A673 (cell line): ENCODE measurements at regions of chr11 and their contacts with region 1.

Region 1: GRCh38 chr11:28107748-28108618 is at the starts of genes KIF18A and METTL15:
- DNase-seq: peak; percentile 100
- H3K4me3 ChIP-seq: peak within 1 kb of the TSS; percentile 57
- H3K27ac ChIP-seq: peak within 1 kb of the TSS; percentile 86
- H3K4me1 ChIP-seq: peaks cover 59% of the 10 kb centered on the region
- H3K27me3 ChIP-seq: no peaks in the 10 kb centered on the region
- CTCF ChIP-seq: no peak
- total RNA-seq, gene KIF18A: 103 and 117 TPM in 2 replicates
- total RNA-seq, gene METTL15: 31.3 and 36.6 TPM in 2 replicates

Region 2: GRCh38 chr11:26914968-26915367 is 1193.0 kb before region 1 on chr11:
- CTCF ChIA-PET with region 1: no interaction called
- POLR2A ChIA-PET with region 1: interaction called, 11 read pairs
- intact Hi-C with region 1: no loop called
- DNase-seq: no peak
- H3K4me3 ChIP-seq: no peak overlapping the region
- H3K27ac ChIP-seq: no peak overlapping the region
- H3K4me1 ChIP-seq: no peaks in the 10 kb centered on the region
- H3K27me3 ChIP-seq: peaks cover 60% of the 10 kb centered on the region
- CTCF ChIP-seq: no peak

Region 3: GRCh38 chr11:27506200-27507182 is 601.5 kb before region 1 on chr11 and contains the start of gene LIN7C:
- CTCF ChIA-PET with region 1: no interaction called
- POLR2A ChIA-PET with region 1: no interaction called
- intact Hi-C with region 1: loop called (anchors 10 kb)
- DNase-seq: peak; percentile 100
- H3K4me3 ChIP-seq: peak within 1 kb of the TSS; percentile 65
- H3K27ac ChIP-seq: peak within 1 kb of the TSS; percentile 91
- H3K4me1 ChIP-seq: peaks cover 20% of the 10 kb centered on the region
- H3K27me3 ChIP-seq: no peaks in the 10 kb centered on the region
- CTCF ChIP-seq: peak; percentile 37
- total RNA-seq, gene LIN7C: 114 and 131 TPM in 2 replicates

Region 4: GRCh38 chr11:28476049-28476448 is 368.1 kb after region 1 on chr11:
- CTCF ChIA-PET with region 1: no interaction called
- POLR2A ChIA-PET with region 1: no interaction called
- intact Hi-C with region 1: loop called (anchors 5 kb)
- DNase-seq: peak; percentile 93
- H3K4me3 ChIP-seq: no peak overlapping the region
- H3K27ac ChIP-seq: no peak overlapping the region
- H3K4me1 ChIP-seq: peaks cover 9% of the 10 kb centered on the region
- H3K27me3 ChIP-seq: peaks cover 76% of the 10 kb centered on the region
- CTCF ChIP-seq: no peak

Region 5: DNA sequence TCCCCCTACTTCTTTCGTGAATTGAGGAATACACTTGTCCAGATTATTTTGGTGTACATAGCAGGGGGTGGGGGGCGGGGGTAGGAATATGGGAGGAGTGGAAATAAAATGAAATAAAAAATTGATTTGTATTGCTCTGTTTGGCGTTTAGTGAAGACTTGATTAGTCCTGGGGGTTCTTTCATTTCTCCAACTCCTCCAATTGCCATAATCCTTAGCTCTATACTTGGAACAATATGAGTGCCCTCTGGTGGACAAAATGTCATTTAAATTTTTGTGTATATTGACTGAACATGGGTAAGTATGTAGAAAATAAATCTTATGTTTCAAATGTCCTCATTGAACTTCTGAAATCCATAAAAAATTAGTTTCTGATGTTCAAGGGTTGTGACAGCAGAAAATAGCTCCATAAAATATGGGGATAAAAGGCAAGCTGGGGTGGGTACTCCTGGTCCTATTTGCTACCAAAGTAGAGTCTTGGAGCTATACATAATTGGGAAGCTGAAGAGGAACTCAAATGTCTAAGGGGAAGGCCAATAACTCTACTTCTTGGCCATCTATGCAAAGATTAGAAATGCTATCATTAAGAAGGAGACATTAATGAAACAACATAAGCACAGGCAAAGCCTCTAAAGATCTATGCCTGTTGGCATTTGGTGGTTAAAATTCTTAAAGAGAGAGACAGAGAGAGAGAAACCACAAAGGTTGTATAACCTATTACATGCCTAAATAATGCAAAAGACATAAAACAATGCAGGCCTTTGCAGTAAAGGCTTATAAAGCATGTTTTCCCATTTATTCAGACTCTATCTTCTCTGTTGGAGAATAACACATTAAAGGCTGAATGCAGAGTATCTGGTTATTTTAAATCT is 421.8 kb after region 1 on chr11:
- CTCF ChIA-PET with region 1: no interaction called
- POLR2A ChIA-PET with region 1: no interaction called
- intact Hi-C with region 1: loop called (anchors 5 kb)
- DNase-seq: peak; percentile 89
- H3K4me3 ChIP-seq: no peak overlapping the region
- H3K27ac ChIP-seq: no peak overlapping the region
- H3K4me1 ChIP-seq: no peaks in the 10 kb centered on the region
- H3K27me3 ChIP-seq: peaks cover 38% of the 10 kb centered on the region
- CTCF ChIP-seq: peak; percentile 93

Region 6: DNA sequence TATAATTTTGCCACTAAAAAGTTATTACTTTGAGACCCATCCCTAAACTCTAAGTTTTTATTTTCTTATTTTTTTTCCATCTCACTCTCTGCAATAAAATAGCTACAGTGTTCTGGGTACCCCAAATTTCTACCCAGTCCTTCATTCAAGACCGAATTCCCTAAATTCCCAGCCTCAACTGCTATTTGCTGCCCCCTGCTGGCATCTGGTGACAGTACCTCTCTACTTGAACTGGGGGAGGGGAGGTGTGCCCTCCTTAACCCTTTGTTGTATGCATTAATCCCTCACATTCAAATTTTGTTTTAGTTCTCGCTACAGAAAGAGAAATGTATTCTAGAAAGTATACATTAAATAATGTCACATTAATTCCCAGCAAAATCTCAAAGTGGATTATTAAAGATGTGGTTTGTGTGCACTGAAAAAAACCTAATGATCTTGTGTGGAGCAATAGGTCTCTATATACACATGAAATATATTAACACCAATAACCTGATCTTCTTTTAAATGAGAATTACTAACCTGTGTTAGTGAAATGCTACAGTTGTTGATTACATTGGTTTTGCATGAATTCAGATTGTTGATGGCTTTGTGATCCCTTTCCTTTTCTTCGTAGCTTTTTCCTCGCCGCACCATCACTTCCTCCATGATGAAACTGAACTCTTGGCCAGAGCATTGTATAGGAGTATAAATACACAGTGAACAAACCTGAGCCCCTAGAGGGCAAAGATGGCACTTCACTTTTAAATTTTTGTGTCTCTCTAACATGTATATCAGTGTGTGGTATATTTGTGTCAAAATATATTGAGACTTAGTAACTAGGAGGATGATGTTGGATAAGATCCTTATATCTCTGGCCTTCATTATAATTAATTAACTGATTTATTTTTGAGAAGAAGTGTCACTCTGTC is 590.2 kb after region 1 on chr11:
- CTCF ChIA-PET with region 1: no interaction called
- POLR2A ChIA-PET with region 1: no interaction called
- intact Hi-C with region 1: loop called (anchors 5 kb)
- DNase-seq: peak; percentile 93
- H3K4me3 ChIP-seq: no peak overlapping the region
- H3K27ac ChIP-seq: no peak overlapping the region
- H3K4me1 ChIP-seq: peaks cover 13% of the 10 kb centered on the region
- H3K27me3 ChIP-seq: no peaks in the 10 kb centered on the region
- CTCF ChIP-seq: peak; percentile 100

Region 7: GRCh38 chr11:29333993-29334775 is 1226.2 kb after region 1 on chr11:
- CTCF ChIA-PET with region 1: no interaction called
- POLR2A ChIA-PET with region 1: no interaction called
- intact Hi-C with region 1: loop called (anchors 10 kb)
- DNase-seq: peak; percentile 92
- H3K4me3 ChIP-seq: no peak overlapping the region
- H3K27ac ChIP-seq: no peak overlapping the region
- H3K4me1 ChIP-seq: no peaks in the 10 kb centered on the region
- H3K27me3 ChIP-seq: peaks cover 72% of the 10 kb centered on the region
- CTCF ChIP-seq: peak; percentile 88